Vagina (tissue), 2 donors: ENCODE measurements at regions of chr14 and their contacts with region 1.

Region 1: DNA sequence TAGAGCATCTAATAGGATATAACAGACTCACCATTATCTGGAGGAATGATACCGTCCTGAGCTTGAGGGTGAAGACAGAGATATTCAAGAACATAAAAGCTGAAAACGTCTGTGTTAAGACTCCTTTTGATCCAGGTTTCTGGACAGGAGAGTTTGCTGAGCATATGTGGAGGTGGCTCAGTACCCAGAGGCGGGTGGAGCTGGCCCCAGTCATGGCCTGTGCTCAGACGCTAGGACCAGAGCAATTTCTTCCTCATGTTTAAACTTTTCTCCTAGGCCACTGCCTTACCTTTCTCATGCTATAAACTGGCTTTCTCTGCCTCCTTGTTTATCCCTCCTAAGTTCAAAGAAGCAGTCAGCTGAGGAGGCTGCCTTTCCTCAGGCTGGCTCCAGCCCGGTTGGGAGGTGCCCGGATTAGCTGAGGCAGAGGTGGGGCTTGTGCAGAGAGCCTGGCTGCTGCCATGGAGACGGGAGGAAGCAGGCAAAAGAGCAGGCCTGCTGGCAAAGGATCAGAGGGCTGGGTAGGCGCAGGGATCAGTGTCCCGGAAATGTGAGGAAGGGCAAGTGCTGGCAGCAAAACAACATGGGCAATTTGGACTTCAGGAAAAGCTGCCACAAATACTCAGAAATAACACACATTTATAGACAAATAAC is 13.7 kb downstream of the COA8 start:
- DNase-seq: no peak
- H3K4me3 ChIP-seq: no peak overlapping the region
- H3K27ac ChIP-seq: peak overlapping the region; percentile 85
- H3K4me1 ChIP-seq: peaks cover 47% of the 10 kb centered on the region
- H3K27me3 ChIP-seq: no peaks in the 10 kb centered on the region
- CTCF ChIP-seq: no peak
- POLR2A ChIP-seq: no peak

Region 2: GRCh38 chr14:103628684-103629502 is 52.4 kb after region 1 on chr14 and contains the start of gene KLC1:
- intact Hi-C with region 1: loop called (anchors 10 kb)
- DNase-seq: no peak
- H3K4me3 ChIP-seq: peak within 1 kb of the TSS; percentile 96 to 97
- H3K27ac ChIP-seq: peak within 1 kb of the TSS; percentile 99
- H3K4me1 ChIP-seq: peaks cover 74% of the 10 kb centered on the region
- H3K27me3 ChIP-seq: no peaks in the 10 kb centered on the region
- CTCF ChIP-seq: no peak
- POLR2A ChIP-seq: peak; percentile 50 to 93
- total RNA-seq, gene KLC1: 322 TPM